PC-9 (cell line): ENCODE measurements at regions of chr7 and their contacts with region 1.

Region 1: DNA sequence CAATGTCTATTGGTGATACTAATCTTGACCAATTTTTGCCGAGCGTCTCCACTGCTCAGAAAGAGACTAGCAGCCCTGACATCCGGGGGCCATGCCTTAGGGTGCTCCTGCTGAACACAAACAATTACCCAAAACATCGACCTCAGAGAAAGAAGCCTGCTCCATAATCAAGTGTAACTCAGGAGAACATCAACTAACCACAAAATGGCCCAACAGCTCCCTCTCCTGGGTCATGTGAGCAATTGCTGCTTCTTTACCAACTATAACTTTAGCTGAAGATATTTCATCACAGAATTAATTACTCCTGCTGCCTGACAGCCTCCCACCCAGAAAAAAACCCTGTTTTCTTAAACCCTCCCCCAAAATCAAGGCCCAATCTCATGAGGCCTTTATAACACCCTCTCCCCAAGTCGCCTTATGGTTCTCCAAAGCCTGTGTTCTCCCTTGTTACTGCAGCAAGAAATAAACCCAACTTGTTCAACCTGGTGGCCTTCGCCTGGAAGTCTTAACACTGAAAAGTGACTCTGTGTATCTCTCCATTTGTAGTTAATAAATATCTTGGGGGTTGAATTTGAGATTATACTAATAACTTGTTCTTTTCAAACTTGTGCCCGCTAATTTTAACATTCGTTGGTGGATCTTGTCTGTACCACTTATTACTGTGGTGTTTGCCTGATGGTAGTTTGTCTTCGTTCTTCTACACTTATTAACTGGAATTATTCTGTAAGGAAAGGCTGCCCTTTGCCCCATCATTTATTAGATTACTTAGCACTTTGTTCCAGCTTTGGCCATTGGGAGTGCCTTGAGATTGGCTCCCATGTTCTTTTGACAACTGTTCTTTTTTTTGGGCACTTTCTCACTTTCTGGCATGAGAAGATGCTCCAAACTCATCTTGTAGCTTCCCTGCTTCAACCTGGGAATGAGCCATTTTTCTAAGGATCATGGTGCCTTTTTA is 21.2 kb upstream of the RAMP3 start:
- DNase-seq: peak; percentile 63 to 74
- H3K4me3 ChIP-seq: no peak overlapping the region
- H3K27ac ChIP-seq: no peak overlapping the region
- H3K4me1 ChIP-seq: 0 out of 2 replicates have a peak, but pooled peaks cover 3% of the 10 kb centered on the region
- H3K27me3 ChIP-seq: no peaks in the 10 kb centered on the region
- CTCF ChIP-seq: peak; percentile 98

Region 2: GRCh38 chr7:44921607-44922359 is 214.6 kb before region 1 on chr7:
- CTCF ChIA-PET with region 1: interaction called, 5 read pairs
- POLR2A ChIA-PET with region 1: no interaction called
- intact Hi-C with region 1: loop called (anchors 2 kb)
- DNase-seq: peak; percentile 61 to 82
- H3K4me3 ChIP-seq: no peak overlapping the region
- H3K27ac ChIP-seq: no peak overlapping the region
- H3K4me1 ChIP-seq: no peaks in the 10 kb centered on the region
- H3K27me3 ChIP-seq: no peaks in the 10 kb centered on the region
- CTCF ChIP-seq: peak; percentile 99

Region 3: DNA sequence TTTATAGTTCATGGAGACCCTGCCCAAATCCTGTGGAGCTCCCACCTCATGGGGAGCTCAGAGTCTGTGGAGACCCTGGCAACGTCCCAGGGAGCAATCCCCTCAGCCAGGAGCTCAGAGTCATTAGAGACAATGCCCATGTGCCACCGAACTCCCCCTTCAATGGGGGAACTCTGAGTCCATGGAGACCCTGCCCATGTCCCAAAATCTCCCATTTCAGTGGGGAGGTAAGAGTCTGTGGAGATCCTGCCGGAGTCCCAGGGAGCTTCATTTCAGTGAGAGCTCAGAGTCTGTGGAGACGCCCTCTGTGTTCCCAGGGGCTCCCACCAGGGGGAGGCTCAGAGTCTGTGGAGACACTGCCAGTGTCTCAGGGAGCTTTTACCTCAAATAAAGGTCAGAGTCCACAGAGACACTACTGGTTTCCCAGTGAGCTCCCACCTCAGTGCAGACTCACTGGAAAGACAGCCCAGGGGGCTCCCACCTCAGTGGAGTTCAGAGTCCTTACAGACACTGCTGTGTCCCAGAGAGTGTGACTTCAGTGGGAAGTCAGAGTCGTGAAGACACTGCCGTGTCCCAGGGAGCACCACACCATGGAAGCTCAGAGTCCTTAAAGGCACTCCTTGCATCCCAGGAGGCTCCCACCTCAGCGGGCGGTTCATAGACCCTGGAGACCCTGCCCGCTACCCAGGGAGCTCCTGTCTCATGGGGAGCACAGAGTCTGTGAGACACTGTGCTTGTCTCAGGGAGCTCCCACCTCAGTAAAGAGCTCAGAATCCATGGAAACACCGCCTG is 162.6 kb before region 1 on chr7:
- CTCF ChIA-PET with region 1: interaction called, 36 read pairs
- POLR2A ChIA-PET with region 1: no interaction called
- intact Hi-C with region 1: loop called (anchors 5 kb)
- DNase-seq: peak in 1 of 2 experiments; percentile 50
- H3K4me3 ChIP-seq: no peak overlapping the region
- H3K27ac ChIP-seq: no peak overlapping the region
- H3K4me1 ChIP-seq: no peaks in the 10 kb centered on the region
- H3K27me3 ChIP-seq: no peaks in the 10 kb centered on the region
- CTCF ChIP-seq: peak; percentile 66

Region 4: DNA sequence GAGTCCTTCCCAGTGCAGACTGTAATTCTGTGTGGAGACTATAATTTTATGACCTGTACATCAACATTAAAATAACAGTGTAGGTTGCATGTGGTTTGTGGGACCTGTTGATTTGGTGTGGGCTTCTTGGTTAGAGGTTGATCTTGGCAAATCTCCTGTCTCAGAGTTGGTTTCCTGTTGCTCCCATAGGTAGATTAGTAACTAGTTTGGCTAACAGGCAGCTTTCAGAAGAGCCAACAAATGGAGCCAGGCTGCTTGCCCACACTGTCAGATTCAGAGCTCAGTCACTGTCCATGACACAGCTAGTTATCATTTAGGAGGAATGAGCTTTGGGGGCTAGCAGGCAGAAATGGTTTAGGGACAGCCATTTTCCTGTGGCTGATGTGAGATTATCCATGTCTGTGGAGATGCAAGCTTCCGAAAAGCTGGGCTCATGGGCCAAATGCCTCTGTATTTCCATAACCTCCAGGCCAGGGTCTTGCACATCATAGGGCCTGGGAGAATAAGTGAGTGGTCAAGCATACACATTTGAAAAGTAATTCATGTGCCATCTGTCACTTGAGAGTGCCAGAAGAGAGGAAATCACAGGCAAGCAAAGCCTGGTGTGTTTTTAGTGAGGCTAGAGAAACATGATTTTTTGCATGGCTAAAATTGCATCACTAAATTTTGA is 103.0 kb before region 1 on chr7:
- CTCF ChIA-PET with region 1: no interaction called
- POLR2A ChIA-PET with region 1: no interaction called
- intact Hi-C with region 1: no loop called
- DNase-seq: no peak
- H3K4me3 ChIP-seq: no peak overlapping the region
- H3K27ac ChIP-seq: no peak overlapping the region
- H3K4me1 ChIP-seq: no peaks in the 10 kb centered on the region
- H3K27me3 ChIP-seq: no peaks in the 10 kb centered on the region
- CTCF ChIP-seq: no peak

Region 5: DNA sequence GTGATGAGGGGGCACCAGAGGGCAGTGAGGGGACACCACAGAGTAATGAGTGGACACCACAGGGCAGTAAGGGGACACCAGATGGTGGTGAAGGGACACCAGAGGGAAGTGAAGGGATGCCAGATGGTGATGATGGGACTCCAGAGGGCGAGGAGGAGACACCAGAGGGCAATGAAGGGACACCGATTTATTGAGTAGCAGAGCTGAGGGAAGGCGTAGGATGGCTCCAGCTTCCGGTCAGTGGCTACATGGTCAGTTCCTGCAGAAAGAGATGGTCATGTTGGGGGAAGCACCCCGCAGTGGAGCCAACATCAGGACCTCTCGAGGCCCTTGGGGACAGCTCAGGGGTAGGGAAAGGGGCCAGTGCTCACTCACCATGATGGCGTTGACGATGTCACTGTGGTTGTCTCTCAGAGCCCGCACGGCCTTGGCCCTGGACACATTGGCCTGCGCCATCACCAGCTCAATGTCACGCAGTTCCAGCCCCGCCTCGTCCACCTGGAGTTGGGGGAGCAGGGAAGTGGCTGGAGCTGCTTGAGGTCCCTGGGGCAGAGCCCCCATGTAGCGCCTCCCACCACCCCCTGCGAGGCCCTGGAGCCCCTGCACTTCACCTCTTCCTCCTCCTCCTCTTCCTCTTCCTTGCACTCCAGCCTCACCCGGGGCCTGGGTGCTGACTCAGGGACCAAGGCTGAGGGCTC is 56.0 kb before region 1 on chr7:
- CTCF ChIA-PET with region 1: no interaction called
- POLR2A ChIA-PET with region 1: no interaction called
- intact Hi-C with region 1: no loop called
- DNase-seq: no peak
- H3K4me3 ChIP-seq: no peak overlapping the region
- H3K27ac ChIP-seq: no peak overlapping the region
- H3K4me1 ChIP-seq: peaks cover 11% of the 10 kb centered on the region
- H3K27me3 ChIP-seq: no peaks in the 10 kb centered on the region
- CTCF ChIP-seq: no peak

Region 6: GRCh38 chr7:45092100-45092928 is 44.1 kb before region 1 on chr7:
- CTCF ChIA-PET with region 1: no interaction called
- POLR2A ChIA-PET with region 1: no interaction called
- intact Hi-C with region 1: no loop called
- DNase-seq: peak; percentile 51 to 75
- H3K4me3 ChIP-seq: no peak overlapping the region
- H3K27ac ChIP-seq: peak overlapping the region; percentile 32
- H3K4me1 ChIP-seq: peaks cover 21% of the 10 kb centered on the region
- H3K27me3 ChIP-seq: no peaks in the 10 kb centered on the region
- CTCF ChIP-seq: no peak

Region 7: GRCh38 chr7:45389073-45389872 is 252.9 kb after region 1 on chr7:
- CTCF ChIA-PET with region 1: no interaction called
- POLR2A ChIA-PET with region 1: no interaction called
- intact Hi-C with region 1: no loop called
- DNase-seq: no peak
- H3K4me3 ChIP-seq: no peak overlapping the region
- H3K27ac ChIP-seq: no peak overlapping the region
- H3K4me1 ChIP-seq: no peaks in the 10 kb centered on the region
- H3K27me3 ChIP-seq: peaks cover 40% of the 10 kb centered on the region
- CTCF ChIP-seq: no peak